BJ (cell line): ENCODE measurements at regions of chr12 and their contacts with region 1.

Region 1: DNA sequence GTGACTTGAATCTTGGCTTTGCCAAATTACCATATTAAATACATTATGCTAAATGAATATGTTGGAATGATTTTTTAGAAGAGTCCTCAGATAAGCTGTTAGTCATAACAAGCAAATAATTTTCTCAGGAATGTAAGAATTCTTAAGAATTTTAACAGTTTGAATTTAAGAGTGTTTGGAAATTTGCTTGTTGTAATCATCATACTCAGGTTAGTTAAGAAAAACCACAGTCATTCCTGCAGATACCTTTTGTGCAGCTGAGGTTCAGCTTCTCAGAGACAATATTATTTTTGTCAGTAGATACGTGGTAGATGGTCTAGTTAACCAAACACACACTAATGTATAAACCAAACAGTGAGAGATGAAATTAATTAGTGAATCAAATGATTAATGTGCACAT is 8.9 kb downstream of the WNK1 start:
- DNase-seq: no peak
- H3K4me3 ChIP-seq: no peak overlapping the region
- H3K27me3 ChIP-seq: no peaks in the 10 kb centered on the region
- CTCF ChIP-seq: no peak

Region 2: DNA sequence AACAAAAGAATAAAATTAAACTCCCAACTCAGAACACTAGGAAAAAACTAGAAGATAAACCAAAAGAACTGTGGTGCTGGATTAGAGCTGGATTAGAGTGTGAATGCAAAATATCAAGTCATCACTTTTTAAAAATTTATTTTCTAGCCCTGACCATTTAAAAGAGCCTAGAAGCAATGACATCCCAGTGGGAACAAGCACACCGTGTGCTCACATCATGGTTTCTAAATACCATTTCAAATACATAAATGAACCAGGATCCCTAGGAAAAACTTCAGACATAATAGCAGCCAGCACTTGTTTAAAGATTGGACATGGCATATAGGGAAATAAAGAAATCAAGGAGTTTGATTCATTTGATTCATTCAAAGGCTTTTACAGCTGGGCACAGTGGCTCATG is 402.2 kb before region 1 on chr12:
- CTCF ChIA-PET with region 1: no interaction called
- POLR2A ChIA-PET with region 1: no interaction called
- DNase-seq: no peak
- H3K4me3 ChIP-seq: no peak overlapping the region
- H3K27me3 ChIP-seq: no peaks in the 10 kb centered on the region
- CTCF ChIP-seq: no peak

Region 3: GRCh38 chr12:810671-811415 is 49.6 kb after region 1 on chr12:
- CTCF ChIA-PET with region 1: interaction called, 11 read pairs
- POLR2A ChIA-PET with region 1: no interaction called
- DNase-seq: no peak
- H3K4me3 ChIP-seq: no peak overlapping the region
- H3K27me3 ChIP-seq: no peaks in the 10 kb centered on the region
- CTCF ChIP-seq: no peak

Region 4: DNA sequence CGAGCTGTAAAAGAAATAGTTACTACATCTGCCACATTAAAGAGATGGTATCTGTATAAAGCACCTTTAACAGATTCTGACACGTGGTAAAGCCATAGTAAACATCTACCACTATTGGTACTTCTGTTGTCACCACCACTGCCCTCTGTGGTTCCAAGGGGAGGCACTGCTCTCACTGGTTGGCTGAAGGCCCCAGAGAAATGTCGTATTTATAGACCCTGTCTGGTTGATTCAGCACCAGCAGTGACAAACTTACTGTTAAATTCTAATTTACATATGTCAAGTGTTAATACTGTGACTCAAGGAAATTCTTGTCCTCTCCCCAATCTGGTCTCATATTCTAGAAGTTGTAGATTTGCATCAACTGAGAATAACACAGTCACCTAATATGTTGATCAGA is 510.9 kb after region 1 on chr12:
- CTCF ChIA-PET with region 1: no interaction called
- POLR2A ChIA-PET with region 1: no interaction called
- DNase-seq: no peak
- H3K4me3 ChIP-seq: no peak overlapping the region
- H3K27me3 ChIP-seq: no peaks in the 10 kb centered on the region
- CTCF ChIP-seq: no peak